Heart right ventricle (tissue), 16 donors: ENCODE measurements at regions of chr20 and their contacts with region 1.

Region 1: GRCh38 chr20:32357869-32358631 is at the start of gene ASXL1:
- DNase-seq: peak; percentile 98 to 99
- ATAC-seq: peak; percentile 96 to 98 (median 97)
- H3K4me3 ChIP-seq: peak within 1 kb of the TSS; percentile 70 to 94 (median 85)
- H3K27ac ChIP-seq: peak within 1 kb of the TSS; percentile 86 to 99 (median 96)
- H3K4me1 ChIP-seq: peaks cover 3 to 65% (median 41%) of the 10 kb centered on the region in 9 donors
- H3K27me3 ChIP-seq: no peaks in the 10 kb centered on the region
- CTCF ChIP-seq: peak in 1 of 9 donors; percentile 32
- total RNA-seq, gene ASXL1: 23.1 to 39.4 (median 29.4) TPM

Region 2: DNA sequence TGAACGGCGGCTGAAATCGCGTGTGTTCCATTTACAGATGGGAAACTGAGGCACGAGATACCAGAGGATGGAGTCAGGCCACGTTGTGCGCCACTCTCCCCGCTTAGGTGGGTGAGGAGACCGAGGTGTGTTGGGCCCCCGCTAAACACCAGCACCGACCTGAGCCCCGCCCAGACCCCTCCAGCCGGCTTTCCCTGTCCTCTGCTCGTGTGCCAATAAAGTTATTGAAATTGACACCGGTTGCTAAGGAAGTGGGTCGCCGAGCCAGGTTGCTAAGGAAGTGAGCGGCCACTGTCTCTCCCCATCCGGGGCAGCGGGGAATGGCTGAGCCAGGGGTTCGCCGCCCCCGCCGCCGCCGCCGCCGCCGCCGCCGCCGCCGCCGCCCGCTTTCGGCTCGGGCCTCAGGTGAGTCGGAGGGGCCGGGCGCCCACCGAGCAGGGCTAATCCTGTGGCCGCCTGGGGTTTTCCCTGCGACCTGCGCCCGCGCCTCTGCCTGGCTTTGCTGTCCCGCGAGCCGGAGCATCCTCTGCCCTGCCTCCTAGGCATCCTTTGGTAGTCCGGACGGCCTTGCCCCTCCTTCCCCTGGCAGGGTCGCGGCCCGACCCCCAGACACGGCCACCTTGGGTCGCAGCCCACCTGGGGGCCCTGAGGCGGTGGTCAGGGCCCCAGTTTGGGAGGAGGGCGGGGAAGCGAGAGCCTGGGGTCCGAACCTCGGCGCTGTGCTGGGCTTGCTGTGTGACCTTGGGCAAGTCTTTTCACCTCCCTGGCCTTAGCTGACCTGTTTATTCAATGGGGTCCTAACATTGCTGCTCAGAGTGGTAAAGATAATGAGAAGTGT is 80.5 kb before region 1 on chr20 and contains the start of gene KIF3B:
- intact Hi-C with region 1: loop called in 2 of 10 experiments (anchors 5 kb)
- DNase-seq: peak; percentile 85 to 93
- ATAC-seq: peak; percentile 92 to 98 (median 96)
- H3K4me3 ChIP-seq: peak within 1 kb of the TSS; percentile 68 to 99 (median 92)
- H3K27ac ChIP-seq: peak within 1 kb of the TSS; percentile 11 to 92 (median 83)
- H3K4me1 ChIP-seq: peaks cover 0 to 29% (median 23%) of the 10 kb centered on the region in 9 donors
- H3K27me3 ChIP-seq: no peaks in the 10 kb centered on the region
- CTCF ChIP-seq: no peak
- total RNA-seq, gene KIF3B: 9.2 to 16.3 (median 11.5) TPM

Region 3: DNA sequence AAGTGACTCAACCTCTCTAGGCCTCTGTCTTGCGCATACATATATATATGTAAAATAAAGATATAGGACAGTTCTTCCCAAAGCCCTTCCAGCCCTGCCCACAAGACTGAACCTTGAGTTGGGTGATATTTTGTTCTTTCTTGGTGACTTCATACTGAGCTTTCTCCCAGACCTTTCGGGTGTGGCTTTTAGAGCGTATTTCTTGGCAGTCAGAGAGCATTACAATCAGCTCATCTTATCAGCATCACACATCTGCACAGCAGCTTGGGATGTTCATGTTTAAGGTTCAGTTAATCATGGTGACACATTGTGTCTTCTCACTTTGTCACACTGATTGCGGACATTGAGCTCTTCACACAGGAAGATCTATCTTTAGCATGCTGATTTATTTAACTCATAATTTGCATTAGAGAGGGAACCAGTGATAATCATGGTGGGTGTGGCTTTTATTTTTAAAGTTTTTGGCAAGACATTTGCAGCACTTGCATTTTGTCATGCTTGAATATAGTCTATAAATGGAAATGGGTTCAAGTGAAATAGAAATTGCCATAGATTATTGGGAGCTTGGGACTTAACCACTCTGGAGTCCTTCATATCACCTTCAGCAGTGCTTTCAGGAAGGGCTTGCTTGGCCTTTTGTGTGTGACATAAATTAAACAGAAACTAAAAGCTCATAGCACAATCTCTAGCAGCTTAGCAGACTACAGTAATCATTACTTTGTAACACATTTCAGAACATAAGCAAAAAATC is 72.3 kb before region 1 on chr20:
- intact Hi-C with region 1: loop called in 1 of 10 experiments (anchors 5 kb)
- DNase-seq: peak in 1 of 2 donors; percentile 12
- ATAC-seq: peak; percentile 55 to 82 (median 73)
- H3K4me3 ChIP-seq: peak overlapping the region in 4 of 10 donors; percentile 4 to 8 (median 5)
- H3K27ac ChIP-seq: peak overlapping the region in 9 of 10 donors; percentile 26 to 77 (median 64)
- H3K4me1 ChIP-seq: peaks cover 3 to 43% (median 29%) of the 10 kb centered on the region in 9 donors
- H3K27me3 ChIP-seq: no peaks in the 10 kb centered on the region
- CTCF ChIP-seq: no peak

Region 4: DNA sequence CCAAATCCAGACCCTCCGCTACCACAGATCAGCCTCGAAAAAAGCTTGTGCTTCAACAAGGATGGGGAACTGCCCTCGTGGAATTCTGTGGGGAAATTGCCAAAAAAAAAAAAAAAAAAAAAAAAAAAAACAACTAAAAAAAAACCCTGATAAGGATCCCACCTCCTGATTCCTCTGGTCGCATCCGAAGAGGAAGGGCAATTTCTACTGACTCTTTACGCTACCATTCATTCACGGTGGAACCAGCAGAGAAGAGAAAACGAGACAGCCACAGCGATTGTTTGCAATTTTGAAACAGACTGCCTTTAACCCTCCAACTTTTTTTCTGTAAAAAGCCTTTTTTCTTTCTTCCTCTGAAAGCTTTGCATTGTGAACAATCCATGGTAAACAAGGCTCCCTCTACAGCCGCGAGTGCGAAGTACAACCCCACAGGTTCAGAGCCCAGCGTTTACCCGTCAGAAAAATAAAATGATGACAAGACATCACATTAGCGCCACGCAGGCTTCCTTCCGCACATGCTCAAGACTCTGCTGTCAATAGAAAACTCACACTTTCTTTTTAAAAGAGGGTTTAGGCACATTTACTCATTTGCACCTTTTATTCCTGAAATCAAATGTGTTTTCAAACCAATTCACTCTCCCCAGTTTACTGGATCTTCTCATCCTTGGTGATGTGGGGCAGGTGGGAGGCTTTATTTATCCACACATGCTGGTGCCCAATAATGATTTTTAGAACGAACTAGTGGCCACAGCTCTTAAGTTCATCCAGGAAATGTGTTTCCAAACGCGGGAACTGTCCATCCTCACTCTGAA is 127.1 kb after region 1 on chr20:
- intact Hi-C with region 1: loop called in 5 of 10 experiments (anchors 5 to 10 kb)
- DNase-seq: peak; percentile 70 to 78
- ATAC-seq: peak in 7 of 8 donors; percentile 23 to 72 (median 65)
- H3K4me3 ChIP-seq: peak overlapping the region; percentile 48 to 92 (median 76)
- H3K27ac ChIP-seq: peak overlapping the region in 9 of 10 donors; percentile 44 to 91 (median 84)
- H3K4me1 ChIP-seq: peaks cover 4 to 45% (median 37%) of the 10 kb centered on the region in 9 donors
- H3K27me3 ChIP-seq: no peaks in the 10 kb centered on the region
- CTCF ChIP-seq: peak; percentile 62 to 89 (median 78)